ENCODE measurements at regions of chr9 and their contacts with region 1.

Region 1: DNA sequence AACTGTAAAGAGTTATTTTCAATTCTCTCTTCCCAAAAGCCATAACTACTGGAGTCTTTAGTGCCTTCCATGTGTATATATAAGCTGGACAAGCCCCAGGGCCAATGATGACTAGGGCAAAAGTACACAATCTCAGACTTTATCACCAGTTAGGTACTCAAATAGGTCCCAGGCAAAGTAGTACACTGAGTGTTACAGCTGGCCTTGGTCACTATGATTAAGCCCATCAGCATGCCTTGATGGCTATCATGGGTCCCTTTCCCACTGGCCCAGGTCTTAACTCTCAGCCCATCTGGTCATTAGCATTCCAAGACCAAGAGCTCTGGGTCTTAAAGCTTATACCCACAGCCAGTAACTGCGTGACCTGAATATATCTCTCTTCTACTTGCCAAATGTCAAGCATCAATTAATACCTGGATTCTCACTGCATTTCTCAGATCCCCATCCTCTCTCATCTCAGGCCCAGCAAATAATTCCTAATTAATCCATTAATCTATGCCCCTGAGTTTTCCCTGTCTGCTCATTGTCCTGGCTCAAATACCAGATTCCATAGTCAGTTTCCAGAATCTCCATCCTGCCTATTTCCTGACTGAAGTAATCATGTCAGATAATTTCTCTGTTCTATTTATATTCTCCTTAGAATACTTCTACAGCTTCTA is 62.3 kb downstream of the NR6A1 start:
- DNase-seq: peak; percentile 85
- ATAC-seq: peak; percentile 51
- H3K4me3 ChIP-seq: no peak overlapping the region
- H3K27ac ChIP-seq: no peak overlapping the region
- H3K4me1 ChIP-seq: peaks cover 14% of the 10 kb centered on the region
- H3K27me3 ChIP-seq: no peaks in the 10 kb centered on the region
- CTCF ChIP-seq: no peak
- POLR2A ChIP-seq: no peak
- RAD21 ChIP-seq: no peak

Region 2: GRCh38 chr9:124420991-124421543 is 287.7 kb before region 1 on chr9:
- CTCF ChIA-PET with region 1: no interaction called
- POLR2A ChIA-PET with region 1: no interaction called
- dilution Hi-C with region 1: no loop called
- in situ Hi-C with region 1: loop called (anchors 25 kb)
- intact Hi-C with region 1: loop called (anchors 1 kb)
- DNase-seq: peak; percentile 13
- ATAC-seq: no peak
- H3K4me3 ChIP-seq: no peak overlapping the region
- H3K27ac ChIP-seq: no peak overlapping the region
- H3K4me1 ChIP-seq: no peaks in the 10 kb centered on the region
- H3K27me3 ChIP-seq: peaks cover 10% of the 10 kb centered on the region
- CTCF ChIP-seq: no peak
- POLR2A ChIP-seq: no peak
- RAD21 ChIP-seq: no peak

Region 3: DNA sequence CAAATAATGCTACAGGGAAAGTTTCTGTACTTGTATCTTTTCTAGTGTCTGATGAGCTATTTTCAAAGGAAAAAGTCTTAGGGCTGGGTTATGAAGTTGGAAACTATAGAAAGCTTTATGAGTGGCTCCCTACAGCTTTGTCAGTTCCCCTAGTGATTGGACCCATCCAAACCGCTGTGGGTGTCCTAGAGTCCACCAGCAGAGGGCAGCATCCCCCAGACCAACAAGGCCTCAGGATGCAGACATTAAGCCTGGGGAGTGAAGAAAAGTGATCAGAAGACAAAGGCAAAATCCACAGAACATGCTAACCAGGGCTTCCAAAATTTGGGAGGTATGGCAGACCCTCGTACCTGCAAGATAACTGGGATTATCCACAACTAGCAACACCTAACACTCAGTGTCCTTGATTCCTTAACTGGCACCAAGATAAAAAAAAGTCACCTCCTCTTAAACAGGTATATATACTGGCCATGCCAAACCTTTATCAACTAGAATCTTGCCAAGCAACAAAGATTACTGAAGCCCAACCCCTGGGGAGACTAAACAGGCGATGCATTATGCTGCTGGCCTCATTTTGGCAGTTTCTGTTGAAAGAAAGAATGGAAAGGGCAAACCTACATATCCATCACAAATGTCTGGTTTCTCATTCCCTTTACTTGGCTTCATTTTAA is 91.2 kb before region 1 on chr9:
- CTCF ChIA-PET with region 1: interaction called, 53 read pairs
- POLR2A ChIA-PET with region 1: interaction called, 6 read pairs
- dilution Hi-C with region 1: no loop called
- in situ Hi-C with region 1: loop called (anchors 5 kb)
- intact Hi-C with region 1: loop called (anchors 1 kb)
- DNase-seq: peak; percentile 79
- ATAC-seq: peak; percentile 98
- H3K4me3 ChIP-seq: no peak overlapping the region
- H3K27ac ChIP-seq: no peak overlapping the region
- H3K4me1 ChIP-seq: peaks cover 2% of the 10 kb centered on the region
- H3K27me3 ChIP-seq: peaks cover 7% of the 10 kb centered on the region
- CTCF ChIP-seq: peak; percentile 97
- POLR2A ChIP-seq: peak; percentile 44; the same call in 1 of the 2 replicates
- RAD21 ChIP-seq: peak; percentile 98

Region 4: GRCh38 chr9:124754289-124754688 is 45.5 kb after region 1 on chr9:
- CTCF ChIA-PET with region 1: interaction called, 17 read pairs
- POLR2A ChIA-PET with region 1: no interaction called
- dilution Hi-C with region 1: no loop called
- in situ Hi-C with region 1: no loop called
- intact Hi-C with region 1: loop called (anchors 1 kb)
- DNase-seq: peak; percentile 55
- ATAC-seq: peak; percentile 63
- H3K4me3 ChIP-seq: no peak overlapping the region
- H3K27ac ChIP-seq: no peak overlapping the region
- H3K4me1 ChIP-seq: peaks cover 11% of the 10 kb centered on the region
- H3K27me3 ChIP-seq: peaks cover 28% of the 10 kb centered on the region
- CTCF ChIP-seq: peak; percentile 64
- POLR2A ChIP-seq: no peak
- RAD21 ChIP-seq: peak; percentile 64

Region 5: GRCh38 chr9:124779362-124780059 is 70.7 kb after region 1 on chr9:
- CTCF ChIA-PET with region 1: no interaction called
- POLR2A ChIA-PET with region 1: interaction called, 20 read pairs
- dilution Hi-C with region 1: no loop called
- in situ Hi-C with region 1: no loop called
- intact Hi-C with region 1: no loop called
- DNase-seq: peak; percentile 98
- ATAC-seq: peak; percentile 82
- H3K4me3 ChIP-seq: no peak overlapping the region
- H3K27ac ChIP-seq: peak overlapping the region; percentile 94
- H3K4me1 ChIP-seq: peaks cover 20% of the 10 kb centered on the region
- H3K27me3 ChIP-seq: peaks cover 3% of the 10 kb centered on the region; the same call in 1 of the 2 replicates
- CTCF ChIP-seq: no peak
- POLR2A ChIP-seq: no peak
- RAD21 ChIP-seq: no peak; the same call in 1 of the 2 replicates

Measured in IMR-90 (cell line).